ENCODE measurements at regions of chr1 and their contacts with region 1.

Region 1: GRCh38 chr1:181044449-181044966 is 10.7 kb downstream of the MR1 start:
- DNase-seq: peak; percentile 60
- ATAC-seq: peak; percentile 95
- H3K4me3 ChIP-seq: no peak overlapping the region; the same call in 1 of the 2 replicates
- H3K27ac ChIP-seq: peak overlapping the region; percentile 81
- H3K4me1 ChIP-seq: peaks cover 20% of the 10 kb centered on the region
- H3K27me3 ChIP-seq: no peaks in the 10 kb centered on the region
- CTCF ChIP-seq: no peak
- EP300 ChIP-seq: peak in 1 of 2 experiments; percentile 44; a peak in 1 of 4 replicates
- POLR2A ChIP-seq: peak; percentile 51; the same call in 1 of the 2 replicates
- RAD21 ChIP-seq: no peak

Region 2: DNA sequence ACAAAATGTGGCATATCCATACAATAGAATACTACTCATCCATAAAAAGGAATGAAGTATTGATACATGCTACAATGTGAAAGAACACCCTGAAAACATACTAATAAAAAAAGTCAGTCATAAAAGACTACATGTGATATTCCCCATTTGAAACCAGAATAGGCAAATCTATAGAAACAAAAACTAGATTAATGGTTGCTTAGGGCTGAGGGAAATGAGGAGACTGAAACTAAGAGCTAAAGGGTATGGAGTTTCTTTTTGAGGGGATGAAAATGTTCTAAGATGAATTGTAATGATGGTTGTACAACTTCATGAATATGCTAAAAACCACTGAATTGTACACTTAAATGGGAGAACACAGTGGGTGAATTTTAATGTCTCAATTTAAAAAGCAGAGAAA is 593.0 kb before region 1 on chr1:
- CTCF ChIA-PET with region 1: no interaction called
- POLR2A ChIA-PET with region 1: no interaction called
- RAD21 ChIA-PET with region 1: no interaction called
- SMC1A ChIA-PET with region 1: no interaction called
- in situ Hi-C with region 1: no loop called
- intact Hi-C with region 1: no loop called
- DNase-seq: no peak
- ATAC-seq: peak; percentile 59
- H3K4me3 ChIP-seq: peak overlapping the region; percentile 0; the same call in 1 of the 2 replicates
- H3K27ac ChIP-seq: no peak overlapping the region
- H3K4me1 ChIP-seq: no peaks in the 10 kb centered on the region
- H3K27me3 ChIP-seq: no peaks in the 10 kb centered on the region
- CTCF ChIP-seq: no peak
- EP300 ChIP-seq: no peak
- POLR2A ChIP-seq: no peak
- RAD21 ChIP-seq: no peak

Region 3: DNA sequence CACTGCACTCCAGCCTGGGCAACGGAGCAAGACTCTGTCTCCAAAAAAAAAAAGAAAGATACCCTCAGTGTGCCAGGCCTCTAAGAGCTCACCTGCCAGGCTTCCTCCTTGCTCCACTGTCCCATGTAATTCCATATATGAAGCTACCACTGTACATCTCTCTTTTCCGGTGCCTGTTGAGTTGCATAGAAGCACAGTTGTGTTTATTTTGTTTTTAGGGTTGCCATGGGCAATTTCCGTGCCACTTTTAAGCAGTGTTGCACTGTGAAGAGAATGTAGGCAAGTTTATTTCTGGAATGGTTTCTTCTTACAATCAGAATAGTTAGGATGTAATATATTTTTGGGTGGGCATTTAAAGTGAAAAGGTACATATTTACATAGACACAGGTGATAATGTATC is 12.6 kb after region 1 on chr1:
- CTCF ChIA-PET with region 1: interaction called, 30 read pairs
- POLR2A ChIA-PET with region 1: interaction called, 12 read pairs
- RAD21 ChIA-PET with region 1: interaction called, 26 read pairs
- SMC1A ChIA-PET with region 1: interaction called, 31 read pairs
- in situ Hi-C with region 1: no loop called
- intact Hi-C with region 1: loop called (anchors 1 kb)
- DNase-seq: no peak
- ATAC-seq: no peak
- H3K4me3 ChIP-seq: no peak overlapping the region
- H3K27ac ChIP-seq: no peak overlapping the region
- H3K4me1 ChIP-seq: peaks cover 12% of the 10 kb centered on the region
- H3K27me3 ChIP-seq: no peaks in the 10 kb centered on the region
- CTCF ChIP-seq: no peak
- EP300 ChIP-seq: no peak
- POLR2A ChIP-seq: no peak
- RAD21 ChIP-seq: no peak

Region 4: DNA sequence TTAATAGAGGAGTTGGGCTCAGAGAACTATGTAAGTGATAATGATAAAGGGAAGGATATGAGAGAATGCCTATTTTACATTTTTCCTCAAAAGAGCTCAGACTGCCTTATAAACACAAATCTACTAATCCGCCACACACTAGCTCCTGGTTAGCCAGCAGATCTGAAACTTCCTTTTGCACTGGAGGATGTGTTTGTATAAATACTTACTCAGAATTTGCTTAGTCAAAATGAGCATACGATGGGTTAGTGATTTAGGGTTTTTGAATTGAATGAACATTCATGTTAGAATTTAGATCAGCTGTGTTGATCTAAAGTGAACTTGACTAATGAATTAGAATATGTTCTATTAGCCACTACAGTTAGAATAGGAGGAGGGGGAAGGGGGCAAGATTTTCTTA is 34.9 kb after region 1 on chr1:
- CTCF ChIA-PET with region 1: interaction called, 86 read pairs
- POLR2A ChIA-PET with region 1: interaction called, 5 read pairs
- RAD21 ChIA-PET with region 1: interaction called, 43 read pairs
- SMC1A ChIA-PET with region 1: interaction called, 85 read pairs
- in situ Hi-C with region 1: no loop called
- intact Hi-C with region 1: no loop called
- DNase-seq: no peak
- ATAC-seq: no peak
- H3K4me3 ChIP-seq: no peak overlapping the region
- H3K27ac ChIP-seq: no peak overlapping the region
- H3K4me1 ChIP-seq: peaks cover 38% of the 10 kb centered on the region
- H3K27me3 ChIP-seq: no peaks in the 10 kb centered on the region
- CTCF ChIP-seq: no peak
- EP300 ChIP-seq: no peak
- POLR2A ChIP-seq: no peak
- RAD21 ChIP-seq: no peak

Region 5: DNA sequence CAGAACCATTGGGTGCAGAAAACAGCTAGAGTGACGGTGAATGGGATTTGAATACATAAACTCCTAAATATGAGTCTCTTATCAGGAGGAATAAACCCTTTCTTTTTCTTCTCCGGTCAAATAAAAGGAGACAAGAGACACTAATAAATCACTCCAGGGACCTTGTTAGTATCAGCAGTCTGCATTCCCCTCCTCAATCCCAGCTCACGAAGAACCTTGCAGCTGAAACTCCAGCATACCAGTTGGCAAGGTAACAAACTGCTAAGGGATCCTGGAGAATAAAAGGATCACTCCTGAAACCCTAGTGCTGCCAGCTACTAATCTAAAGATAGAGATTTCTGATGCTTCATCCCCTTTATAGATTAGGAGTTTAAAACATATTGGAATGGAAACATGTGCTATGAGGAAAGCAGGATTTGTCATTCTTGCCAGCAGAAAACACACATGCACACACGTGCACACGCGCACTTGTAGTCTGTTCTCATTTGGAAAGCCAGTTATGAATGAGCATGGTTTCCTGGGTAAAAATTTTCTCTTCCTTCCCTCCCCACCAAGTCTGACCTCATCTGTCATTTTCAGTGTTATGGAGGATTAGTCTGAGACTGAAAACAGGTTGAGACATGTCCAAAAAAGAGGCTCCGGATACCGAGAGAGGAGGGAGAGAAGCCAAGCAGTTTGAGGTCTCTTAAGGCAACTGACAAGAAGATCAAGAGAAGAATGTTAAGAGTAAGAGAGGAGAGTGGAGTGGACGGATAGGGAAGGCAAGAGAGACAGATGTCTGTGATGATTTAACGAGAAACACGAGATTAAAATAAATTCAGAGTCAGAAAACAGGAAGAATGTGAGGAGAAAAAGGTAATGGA is 54.9 kb after region 1 on chr1:
- CTCF ChIA-PET with region 1: interaction called, 6 read pairs
- POLR2A ChIA-PET with region 1: interaction called, 4 read pairs
- RAD21 ChIA-PET with region 1: interaction called, 14 read pairs
- SMC1A ChIA-PET with region 1: interaction called, 21 read pairs
- in situ Hi-C with region 1: no loop called
- intact Hi-C with region 1: no loop called
- DNase-seq: peak; percentile 95
- ATAC-seq: peak; percentile 60
- H3K4me3 ChIP-seq: peak overlapping the region; percentile 18
- H3K27ac ChIP-seq: peak overlapping the region; percentile 89
- H3K4me1 ChIP-seq: peaks cover 86% of the 10 kb centered on the region
- H3K27me3 ChIP-seq: no peaks in the 10 kb centered on the region
- CTCF ChIP-seq: no peak
- EP300 ChIP-seq: peak; percentile 67 to 90; a peak in 3 of 4 replicates
- POLR2A ChIP-seq: no peak
- RAD21 ChIP-seq: no peak; the same call in 1 of the 2 replicates

Region 6: DNA sequence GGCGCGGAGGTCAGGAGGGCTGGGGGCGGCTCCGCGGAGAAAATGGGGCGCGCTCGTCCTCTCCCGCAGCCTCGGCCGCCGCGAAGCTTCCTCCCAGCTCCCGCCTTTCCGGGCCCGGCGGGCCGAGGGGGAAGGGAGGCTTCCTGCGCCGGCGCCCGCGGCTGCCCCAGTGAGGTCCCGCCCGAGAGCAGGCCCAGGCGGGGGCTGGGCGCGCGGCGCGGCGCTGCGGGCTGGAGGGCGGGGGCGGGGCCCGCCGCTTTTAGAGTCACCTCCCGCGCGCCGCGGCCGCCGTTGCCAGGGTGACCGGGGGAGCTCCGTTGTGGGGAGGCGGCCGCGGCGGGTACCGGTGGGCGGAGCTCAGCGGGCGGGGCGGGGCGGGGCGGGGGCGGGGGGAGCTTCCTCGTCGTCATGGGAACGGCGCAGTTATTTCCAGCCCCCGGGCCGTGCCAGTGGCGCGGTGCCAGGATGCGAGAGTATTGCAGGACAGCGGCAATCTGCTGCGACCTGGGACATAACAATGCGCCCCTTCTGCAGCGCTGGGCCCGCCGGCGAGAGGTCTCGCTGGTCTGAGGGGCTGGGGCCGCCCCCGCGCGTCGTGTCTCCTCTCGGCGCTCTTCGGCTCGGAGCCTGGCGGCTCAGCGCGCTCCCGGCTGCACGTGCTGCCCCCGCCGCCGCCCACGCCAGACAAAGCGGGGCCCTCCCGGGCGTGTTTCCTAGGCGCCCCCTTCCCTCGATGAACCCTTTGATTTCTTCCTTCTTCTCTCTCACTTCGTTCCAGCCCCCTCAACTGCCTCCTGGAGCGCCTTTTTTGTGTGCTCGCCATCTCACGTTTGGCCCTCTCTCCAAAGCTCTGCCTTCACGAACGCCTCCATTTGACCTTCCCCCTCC is 60.9 kb after region 1 on chr1:
- CTCF ChIA-PET with region 1: no interaction called
- POLR2A ChIA-PET with region 1: interaction called, 4 read pairs
- RAD21 ChIA-PET with region 1: interaction called, 14 read pairs
- SMC1A ChIA-PET with region 1: interaction called, 21 read pairs
- in situ Hi-C with region 1: no loop called
- intact Hi-C with region 1: no loop called
- DNase-seq: no peak
- ATAC-seq: peak; percentile 82
- H3K4me3 ChIP-seq: peak overlapping the region; percentile 94
- H3K27ac ChIP-seq: peak overlapping the region; percentile 70
- H3K4me1 ChIP-seq: peaks cover 44% of the 10 kb centered on the region
- H3K27me3 ChIP-seq: no peaks in the 10 kb centered on the region
- CTCF ChIP-seq: no peak
- EP300 ChIP-seq: no peak
- POLR2A ChIP-seq: peak; percentile 65
- RAD21 ChIP-seq: no peak

Region 7: DNA sequence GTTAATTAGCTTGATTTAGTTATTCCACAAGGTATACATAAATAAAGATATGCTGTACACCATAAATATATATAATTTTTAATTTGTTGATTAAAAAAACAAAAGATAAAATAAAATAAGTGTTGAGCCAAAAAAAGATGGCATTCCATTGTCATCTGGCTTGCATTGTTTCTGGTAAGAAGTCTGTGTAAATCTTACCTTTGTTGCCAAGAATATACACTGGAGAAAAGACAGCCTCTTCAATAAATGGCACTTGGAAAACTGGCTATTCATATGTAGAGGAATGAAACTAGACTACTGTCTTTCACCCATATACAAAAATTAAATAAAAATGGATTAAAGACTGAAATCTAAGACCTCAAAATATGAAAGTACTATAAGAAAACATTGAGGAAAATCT is 240.5 kb after region 1 on chr1:
- CTCF ChIA-PET with region 1: no interaction called
- POLR2A ChIA-PET with region 1: no interaction called
- RAD21 ChIA-PET with region 1: no interaction called
- SMC1A ChIA-PET with region 1: no interaction called
- in situ Hi-C with region 1: no loop called
- intact Hi-C with region 1: no loop called
- DNase-seq: no peak
- ATAC-seq: no peak
- H3K4me3 ChIP-seq: no peak overlapping the region
- H3K27ac ChIP-seq: no peak overlapping the region
- H3K4me1 ChIP-seq: no peaks in the 10 kb centered on the region
- H3K27me3 ChIP-seq: no peaks in the 10 kb centered on the region
- CTCF ChIP-seq: no peak
- EP300 ChIP-seq: no peak
- POLR2A ChIP-seq: no peak
- RAD21 ChIP-seq: no peak

Region 8: DNA sequence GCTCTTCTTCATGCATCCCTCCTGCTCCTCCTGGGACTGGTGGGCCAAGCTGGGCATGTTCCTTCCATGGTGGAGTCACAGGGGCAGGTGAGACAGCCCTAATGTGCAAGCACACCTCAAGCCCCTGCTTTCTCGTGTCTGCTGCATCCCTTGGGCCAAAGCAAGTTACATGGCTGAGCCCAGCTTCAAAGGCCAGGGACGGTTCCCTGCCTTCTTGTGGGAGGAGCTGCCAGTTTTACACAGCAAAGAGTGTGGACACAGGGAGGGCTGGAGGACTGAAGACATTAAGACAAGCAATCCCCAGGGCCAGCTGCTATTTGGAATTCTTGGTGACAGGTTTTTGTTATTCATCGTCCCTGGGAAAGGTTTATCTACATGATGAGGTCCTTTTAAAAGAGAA is 263.6 kb after region 1 on chr1:
- CTCF ChIA-PET with region 1: no interaction called
- POLR2A ChIA-PET with region 1: no interaction called
- RAD21 ChIA-PET with region 1: no interaction called
- SMC1A ChIA-PET with region 1: no interaction called
- in situ Hi-C with region 1: no loop called
- intact Hi-C with region 1: no loop called
- DNase-seq: no peak
- ATAC-seq: no peak
- H3K4me3 ChIP-seq: no peak overlapping the region
- H3K27ac ChIP-seq: no peak overlapping the region
- H3K4me1 ChIP-seq: no peaks in the 10 kb centered on the region
- H3K27me3 ChIP-seq: peaks cover 0 to 3% of the 10 kb centered on the region in 2 experiments; a peak in 2 of 4 replicates
- CTCF ChIP-seq: no peak
- EP300 ChIP-seq: no peak
- POLR2A ChIP-seq: no peak
- RAD21 ChIP-seq: no peak